Thyroid gland (tissue), 4 donors: ENCODE measurements at regions of chr6 and their contacts with region 1.

Region 1: GRCh38 chr6:152863618-152864326 is 113.2 kb downstream of the VIP start:
- DNase-seq: peak; percentile 58 to 70
- H3K4me3 ChIP-seq: no peak overlapping the region
- H3K27ac ChIP-seq: no peak overlapping the region
- H3K4me1 ChIP-seq: no peaks in the 10 kb centered on the region
- H3K27me3 ChIP-seq: no peaks in the 10 kb centered on the region
- CTCF ChIP-seq: peak; percentile 44 to 72 (median 59)
- POLR2A ChIP-seq: no peak

Region 2: DNA sequence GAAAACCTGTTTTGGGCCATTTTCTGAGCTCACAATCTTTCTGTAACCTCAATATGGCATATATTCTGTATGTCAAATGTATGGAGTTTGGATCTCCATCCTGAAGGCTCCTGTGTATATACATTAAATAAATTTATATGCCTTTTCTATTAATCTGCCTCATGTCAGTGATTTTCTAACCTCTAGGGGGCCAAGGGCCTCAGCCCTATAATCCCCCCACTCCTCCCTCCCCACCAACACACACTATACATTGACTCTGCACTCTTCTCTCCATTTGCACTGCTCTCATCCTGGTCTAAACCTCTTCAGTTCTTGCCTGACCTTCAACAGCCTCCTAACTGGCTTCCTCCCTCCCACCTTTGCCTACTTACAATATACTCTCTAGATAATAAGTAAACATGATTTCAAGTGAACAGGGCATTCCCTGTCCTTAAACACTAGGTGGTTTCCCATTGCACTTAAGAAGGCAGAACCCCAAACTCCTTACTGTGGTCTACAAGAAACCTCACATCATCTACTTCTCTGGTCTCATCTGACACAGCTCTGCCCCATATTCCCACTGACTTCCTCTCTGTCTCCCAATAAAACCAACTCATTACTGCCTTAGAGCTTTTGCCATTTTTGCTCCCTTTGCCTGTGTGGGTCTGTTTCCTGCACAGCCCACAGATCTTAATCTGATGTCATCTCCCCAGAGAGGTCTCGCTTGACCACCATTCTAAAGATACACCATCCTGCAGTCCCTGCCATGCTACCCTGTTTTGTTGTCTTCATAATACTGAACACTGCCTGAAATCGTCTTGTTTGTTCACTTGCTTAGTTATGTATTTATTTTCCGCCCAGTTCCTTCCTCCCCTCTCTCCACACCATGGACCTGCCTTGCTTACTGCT is 440.3 kb before region 1 on chr6:
- intact Hi-C with region 1: no loop called
- DNase-seq: no peak
- H3K4me3 ChIP-seq: peak overlapping the region in 1 of 3 donors; percentile 17
- H3K27ac ChIP-seq: peak overlapping the region in 2 of 3 donors; percentile 63 to 71
- H3K4me1 ChIP-seq: peaks cover 10 to 14% of the 10 kb centered on the region in 2 donors
- H3K27me3 ChIP-seq: no peaks in the 10 kb centered on the region
- CTCF ChIP-seq: no peak
- POLR2A ChIP-seq: no peak

Region 3: DNA sequence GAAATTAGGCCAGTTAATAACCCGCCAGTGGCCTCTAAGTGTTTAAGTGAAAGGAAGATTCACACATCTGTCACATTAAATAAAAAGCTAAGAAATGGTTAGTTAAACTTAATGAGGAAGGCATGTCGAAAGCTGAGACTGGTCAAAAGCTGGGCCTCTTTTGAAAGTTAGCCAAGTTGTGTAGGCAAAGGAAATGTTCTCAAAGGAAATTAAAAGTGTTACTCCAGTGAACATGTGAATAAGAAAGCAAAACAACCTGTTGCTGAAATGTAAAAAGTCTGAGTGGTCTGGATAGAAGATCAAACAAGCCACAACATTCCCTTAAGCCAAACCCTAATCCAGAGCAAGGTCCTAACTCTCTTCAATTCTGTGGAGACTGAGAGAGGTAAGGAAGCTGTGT is 149.7 kb after region 1 on chr6:
- intact Hi-C with region 1: no loop called
- DNase-seq: no peak
- H3K4me3 ChIP-seq: no peak overlapping the region
- H3K27ac ChIP-seq: no peak overlapping the region
- H3K4me1 ChIP-seq: no peaks in the 10 kb centered on the region
- H3K27me3 ChIP-seq: no peaks in the 10 kb centered on the region
- CTCF ChIP-seq: no peak
- POLR2A ChIP-seq: no peak

Region 4: GRCh38 chr6:153023977-153024708 is 160.4 kb after region 1 on chr6:
- intact Hi-C with region 1: loop called (anchors 5 kb)
- DNase-seq: peak; percentile 18 to 23
- H3K4me3 ChIP-seq: no peak overlapping the region
- H3K27ac ChIP-seq: no peak overlapping the region
- H3K4me1 ChIP-seq: no peaks in the 10 kb centered on the region
- H3K27me3 ChIP-seq: no peaks in the 10 kb centered on the region
- CTCF ChIP-seq: peak; percentile 39 to 79 (median 58)
- POLR2A ChIP-seq: no peak